A549 (cell line): ENCODE measurements at regions of chr5 and their contacts with region 1.

Region 1: DNA sequence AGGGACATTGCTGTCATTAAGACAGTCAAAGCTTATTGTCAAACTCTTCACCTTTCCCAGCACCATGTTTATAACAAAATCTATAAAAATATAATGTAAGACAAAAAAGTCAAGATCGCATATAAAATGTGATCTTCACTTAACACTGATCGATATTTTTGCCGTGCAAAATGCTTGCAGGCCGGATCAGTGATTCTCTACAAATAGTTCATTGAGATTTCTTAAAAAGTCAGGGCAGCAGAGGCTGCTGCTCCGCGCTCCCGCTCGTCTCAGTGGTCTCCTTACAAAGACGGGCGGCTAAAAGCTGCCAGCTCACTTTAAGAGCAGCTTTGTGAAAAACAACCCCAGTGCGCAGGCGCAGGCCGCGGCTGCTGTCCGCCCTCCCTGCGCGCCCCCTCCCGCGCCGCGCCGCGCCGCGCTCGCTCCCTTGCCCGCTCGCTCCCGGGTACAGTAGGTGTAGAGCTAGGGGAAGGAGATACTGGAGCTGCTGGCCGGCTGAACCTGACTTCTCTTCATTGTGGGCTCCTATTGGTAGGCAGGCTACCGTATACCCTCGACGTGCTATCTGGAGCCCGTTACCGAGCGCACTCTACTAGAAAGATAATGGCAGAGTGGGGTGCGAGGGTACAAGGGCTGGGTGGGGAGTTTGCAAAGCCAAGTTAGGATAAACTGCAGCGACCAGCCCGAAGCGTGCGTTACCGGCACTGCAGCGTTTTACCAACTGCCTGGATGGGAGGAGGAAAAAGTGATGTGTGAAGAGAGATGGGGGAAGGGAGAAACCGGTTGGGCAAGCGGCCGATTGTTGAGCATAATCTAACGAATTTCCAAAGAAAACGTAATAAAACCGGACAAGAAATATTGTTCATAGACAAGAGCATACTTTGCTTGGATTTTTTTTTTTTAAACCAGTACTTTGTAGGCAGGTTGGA is at the start of gene ARRDC3:
- DNase-seq: peak; percentile 95 to 97
- ATAC-seq: peak; percentile 80 to 85
- H3K4me3 ChIP-seq: peak within 1 kb of the TSS; percentile 60
- H3K27ac ChIP-seq: peak within 1 kb of the TSS; percentile 91 to 96
- H3K4me1 ChIP-seq: peaks cover 6% of the 10 kb centered on the region; the same call in 2 of the 3 replicates
- CTCF ChIP-seq: no peak
- EP300 ChIP-seq: no peak; a peak in 1 of 5 replicates
- POLR2A ChIP-seq: peak; percentile 97
- RAD21 ChIP-seq: peak; percentile 3 to 27; a peak in 3 of 5 replicates
- polyA plus RNA-seq, gene ARRDC3: 32.4 and 36.3 TPM in 2 replicates

Region 2: DNA sequence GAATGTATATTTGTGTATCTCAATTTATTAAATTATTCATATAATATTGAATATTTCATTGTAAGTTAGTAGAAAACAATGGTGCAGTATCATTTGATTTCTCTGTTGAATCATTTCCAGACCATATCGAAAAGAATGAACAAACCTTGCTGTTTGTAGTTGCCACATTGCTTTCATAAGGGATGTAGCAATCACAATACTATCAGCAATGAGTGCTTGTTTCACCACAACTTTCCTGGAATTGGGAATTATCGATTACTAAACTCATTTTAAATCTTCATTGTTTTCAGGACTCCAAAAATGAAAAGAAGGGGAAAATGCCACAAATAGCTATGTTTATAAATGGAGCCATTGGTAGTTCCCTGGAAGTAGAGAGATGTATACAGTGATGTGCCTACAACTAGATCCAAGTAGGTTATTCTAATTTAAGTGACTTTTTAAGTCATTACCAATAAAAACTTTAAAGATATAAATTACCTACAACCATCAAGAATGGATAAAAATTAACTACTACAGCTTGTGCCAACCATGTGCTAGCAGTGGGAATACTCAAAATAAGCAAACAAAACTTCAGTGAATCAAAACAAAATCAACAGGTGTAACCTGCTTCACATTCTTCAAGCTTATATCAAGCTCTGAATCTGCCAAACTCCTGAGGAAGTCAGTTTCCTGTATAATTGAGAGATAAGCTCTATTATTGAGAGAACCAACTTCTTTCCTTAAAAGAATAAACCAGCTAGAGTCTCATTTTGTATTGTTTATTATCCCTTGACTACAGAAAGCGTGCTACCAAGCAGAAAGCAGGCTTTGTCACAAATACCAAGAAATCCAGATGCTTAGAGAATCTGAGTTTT is 466.1 kb before region 1 on chr5:
- CTCF ChIA-PET with region 1: interaction called, 12 read pairs
- POLR2A ChIA-PET with region 1: interaction called, 3 read pairs
- DNase-seq: no peak
- ATAC-seq: no peak
- H3K4me3 ChIP-seq: no peak overlapping the region
- H3K27ac ChIP-seq: no peak overlapping the region
- H3K4me1 ChIP-seq: peaks cover 29% of the 10 kb centered on the region
- CTCF ChIP-seq: no peak
- EP300 ChIP-seq: no peak
- POLR2A ChIP-seq: no peak
- RAD21 ChIP-seq: no peak

Region 3: GRCh38 chr5:91106842-91107511 is 276.3 kb before region 1 on chr5:
- CTCF ChIA-PET with region 1: interaction called, 48 read pairs
- POLR2A ChIA-PET with region 1: interaction called, 8 read pairs
- DNase-seq: no peak
- ATAC-seq: no peak
- H3K4me3 ChIP-seq: no peak overlapping the region
- H3K27ac ChIP-seq: no peak overlapping the region
- H3K4me1 ChIP-seq: peaks cover 7% of the 10 kb centered on the region; the same call in 2 of the 3 replicates
- CTCF ChIP-seq: no peak
- EP300 ChIP-seq: no peak
- POLR2A ChIP-seq: no peak
- RAD21 ChIP-seq: no peak

Region 4: GRCh38 chr5:91272858-91273257 is 110.4 kb before region 1 on chr5:
- CTCF ChIA-PET with region 1: interaction called, 20 read pairs
- POLR2A ChIA-PET with region 1: interaction called, 7 read pairs
- DNase-seq: peak in 1 of 2 experiments; percentile 22
- ATAC-seq: peak in 1 of 2 experiments; percentile 45; a peak in 2 of 6 replicates
- H3K4me3 ChIP-seq: no peak overlapping the region
- H3K27ac ChIP-seq: no peak overlapping the region
- H3K4me1 ChIP-seq: peaks cover 11% of the 10 kb centered on the region
- CTCF ChIP-seq: no peak
- EP300 ChIP-seq: no peak
- POLR2A ChIP-seq: no peak
- RAD21 ChIP-seq: no peak

Region 5: DNA sequence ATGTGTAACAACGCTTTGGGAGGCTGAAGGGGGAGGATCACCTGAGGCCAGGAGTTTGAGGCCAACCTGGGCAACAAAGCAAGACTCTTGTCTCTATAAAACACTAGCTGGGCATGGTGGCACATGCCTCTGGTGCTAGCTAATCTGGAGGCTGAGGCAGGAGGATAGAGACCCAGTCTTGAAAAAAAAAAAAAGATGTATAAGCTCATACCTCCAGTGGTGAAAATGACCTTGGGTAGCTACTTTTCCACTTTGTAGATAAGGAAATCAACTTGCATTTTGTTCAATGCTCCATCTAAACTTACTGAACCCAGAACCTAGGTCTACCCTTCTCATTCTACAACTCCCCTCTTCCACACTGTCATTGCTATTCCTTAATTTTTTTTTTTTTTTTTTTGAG is 16.7 kb before region 1 on chr5:
- CTCF ChIA-PET with region 1: interaction called, 11 read pairs
- POLR2A ChIA-PET with region 1: interaction called, 14 read pairs
- DNase-seq: no peak
- ATAC-seq: peak; percentile 50 to 66; a peak in 3 of 6 replicates
- H3K4me3 ChIP-seq: no peak overlapping the region
- H3K27ac ChIP-seq: no peak overlapping the region
- H3K4me1 ChIP-seq: peaks cover under 1% of the 10 kb centered on the region; the same call in 1 of the 3 replicates
- CTCF ChIP-seq: no peak
- EP300 ChIP-seq: no peak
- POLR2A ChIP-seq: no peak
- RAD21 ChIP-seq: no peak